HAP-1 (cell line): ENCODE measurements at regions of chr3 and their contacts with region 1.

Region 1: GRCh38 chr3:183895296-183895695 is 10.6 kb upstream of the PARL start:
- DNase-seq: peak; percentile 50
- H3K4me3 ChIP-seq: no peak overlapping the region
- H3K4me1 ChIP-seq: no peaks in the 10 kb centered on the region; the same call in 1 of the 2 replicates
- H3K27me3 ChIP-seq: no peaks in the 10 kb centered on the region; the same call in 1 of the 2 replicates

Region 2: DNA sequence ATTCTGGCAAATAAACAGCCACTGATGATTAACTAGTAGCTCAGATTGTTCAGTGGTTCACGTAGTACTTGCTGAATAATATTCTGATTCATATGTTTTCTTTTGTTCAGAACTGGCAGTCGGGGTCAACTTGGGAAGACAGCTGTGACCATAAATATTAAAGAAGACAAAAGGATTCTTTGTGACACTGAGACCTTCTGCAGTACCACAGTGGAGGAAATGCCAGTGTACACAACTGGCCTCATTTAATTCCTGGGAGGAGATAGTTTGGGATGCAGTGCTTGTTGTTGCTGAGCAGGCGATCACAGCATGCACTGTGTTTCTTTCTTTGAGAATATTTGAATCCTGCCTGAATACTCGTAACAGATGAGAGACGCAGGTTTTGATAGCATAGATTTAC is 440.2 kb before region 1 on chr3:
- in situ Hi-C with region 1: no loop called
- DNase-seq: no peak
- H3K4me3 ChIP-seq: no peak overlapping the region
- H3K4me1 ChIP-seq: peaks cover 2% of the 10 kb centered on the region
- H3K27me3 ChIP-seq: no peaks in the 10 kb centered on the region

Region 3: GRCh38 chr3:184110316-184110725 is 215.0 kb after region 1 on chr3:
- in situ Hi-C with region 1: loop called (anchors 10 kb)
- DNase-seq: no peak
- H3K4me3 ChIP-seq: no peak overlapping the region
- H3K4me1 ChIP-seq: no peaks in the 10 kb centered on the region
- H3K27me3 ChIP-seq: peaks cover 4% of the 10 kb centered on the region; the same call in 1 of the 2 replicates

Region 4: GRCh38 chr3:184289426-184289938 is 394.2 kb after region 1 on chr3:
- in situ Hi-C with region 1: loop called (anchors 5 kb)
- DNase-seq: peak; percentile 45 to 83
- H3K4me3 ChIP-seq: no peak overlapping the region
- H3K4me1 ChIP-seq: no peaks in the 10 kb centered on the region
- H3K27me3 ChIP-seq: no peaks in the 10 kb centered on the region; the same call in 1 of the 2 replicates